Vagina (tissue), 2 donors: ENCODE measurements at regions of chr14 and their contacts with region 1.

Region 1: DNA sequence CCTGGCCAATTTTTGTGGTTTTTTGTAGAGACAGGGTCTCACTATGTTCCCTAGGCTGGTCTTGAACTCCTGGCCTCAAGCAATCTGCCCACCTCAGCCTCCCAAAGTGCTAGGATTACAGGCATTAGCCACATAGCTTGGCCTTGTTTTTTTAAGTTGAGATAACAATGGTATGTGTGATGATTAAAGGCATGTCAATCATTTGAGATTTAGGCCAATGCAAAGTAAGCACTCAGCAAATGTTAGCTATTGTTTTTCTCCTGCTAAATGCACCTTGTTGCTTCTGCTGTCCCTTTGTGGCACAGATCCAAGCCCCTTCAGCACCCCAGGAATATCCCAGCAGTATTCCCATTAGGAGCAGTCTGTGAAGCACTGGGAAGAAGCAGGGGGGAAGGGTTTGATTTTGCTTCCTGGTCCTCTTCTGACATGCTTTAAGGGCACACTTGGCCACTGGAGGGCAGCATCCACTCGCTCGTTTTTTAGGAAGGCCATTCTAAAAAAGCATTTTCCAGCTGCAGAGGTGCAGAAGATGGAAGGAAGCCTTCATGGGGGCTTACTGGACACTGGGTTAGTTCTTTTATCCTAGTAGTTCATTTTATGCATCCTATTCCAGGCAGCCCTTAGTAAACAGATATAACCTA is 70.2 kb upstream of the ZFP36L1 start:
- DNase-seq: peak in 1 of 2 donors; percentile 52
- H3K4me3 ChIP-seq: no peak overlapping the region
- H3K27ac ChIP-seq: no peak overlapping the region
- H3K4me1 ChIP-seq: no peaks in the 10 kb centered on the region
- H3K27me3 ChIP-seq: no peaks in the 10 kb centered on the region
- CTCF ChIP-seq: peak; percentile 53 to 64 (median 55)
- POLR2A ChIP-seq: no peak

Region 2: DNA sequence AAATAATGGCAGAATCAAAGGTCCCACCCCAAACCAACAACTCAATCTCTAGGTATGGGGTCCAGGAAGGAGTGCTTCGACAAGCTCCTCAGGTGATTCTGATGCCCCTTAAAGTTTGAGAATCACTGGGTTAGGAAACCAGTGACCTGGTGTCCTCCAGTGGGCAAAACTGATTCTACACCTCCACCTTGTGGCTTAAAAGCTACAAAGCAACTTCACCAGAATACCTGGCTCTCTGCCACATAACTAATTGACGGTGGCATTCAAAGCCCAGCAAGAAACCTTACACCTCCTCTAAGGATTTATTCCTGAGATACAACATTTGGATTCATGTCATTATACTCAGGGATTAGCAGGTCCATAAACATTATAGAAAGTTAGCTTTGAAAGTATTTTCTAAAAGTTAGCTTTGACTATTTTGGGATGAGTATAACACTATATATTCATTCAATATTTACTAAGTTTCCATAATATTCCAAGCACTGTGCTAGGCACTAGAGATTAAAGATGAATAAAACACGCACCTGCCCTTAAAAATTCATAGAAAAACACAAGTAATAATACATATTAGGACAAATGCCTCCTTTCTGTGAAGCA is 244.4 kb after region 1 on chr14:
- intact Hi-C with region 1: loop called (anchors 5 kb)
- DNase-seq: no peak
- H3K4me3 ChIP-seq: no peak overlapping the region
- H3K27ac ChIP-seq: no peak overlapping the region
- H3K4me1 ChIP-seq: no peaks in the 10 kb centered on the region
- H3K27me3 ChIP-seq: no peaks in the 10 kb centered on the region
- CTCF ChIP-seq: peak; percentile 46 to 70 (median 69)
- POLR2A ChIP-seq: no peak